ENCODE measurements at regions of chr10 and their contacts with region 1.

Region 1: DNA sequence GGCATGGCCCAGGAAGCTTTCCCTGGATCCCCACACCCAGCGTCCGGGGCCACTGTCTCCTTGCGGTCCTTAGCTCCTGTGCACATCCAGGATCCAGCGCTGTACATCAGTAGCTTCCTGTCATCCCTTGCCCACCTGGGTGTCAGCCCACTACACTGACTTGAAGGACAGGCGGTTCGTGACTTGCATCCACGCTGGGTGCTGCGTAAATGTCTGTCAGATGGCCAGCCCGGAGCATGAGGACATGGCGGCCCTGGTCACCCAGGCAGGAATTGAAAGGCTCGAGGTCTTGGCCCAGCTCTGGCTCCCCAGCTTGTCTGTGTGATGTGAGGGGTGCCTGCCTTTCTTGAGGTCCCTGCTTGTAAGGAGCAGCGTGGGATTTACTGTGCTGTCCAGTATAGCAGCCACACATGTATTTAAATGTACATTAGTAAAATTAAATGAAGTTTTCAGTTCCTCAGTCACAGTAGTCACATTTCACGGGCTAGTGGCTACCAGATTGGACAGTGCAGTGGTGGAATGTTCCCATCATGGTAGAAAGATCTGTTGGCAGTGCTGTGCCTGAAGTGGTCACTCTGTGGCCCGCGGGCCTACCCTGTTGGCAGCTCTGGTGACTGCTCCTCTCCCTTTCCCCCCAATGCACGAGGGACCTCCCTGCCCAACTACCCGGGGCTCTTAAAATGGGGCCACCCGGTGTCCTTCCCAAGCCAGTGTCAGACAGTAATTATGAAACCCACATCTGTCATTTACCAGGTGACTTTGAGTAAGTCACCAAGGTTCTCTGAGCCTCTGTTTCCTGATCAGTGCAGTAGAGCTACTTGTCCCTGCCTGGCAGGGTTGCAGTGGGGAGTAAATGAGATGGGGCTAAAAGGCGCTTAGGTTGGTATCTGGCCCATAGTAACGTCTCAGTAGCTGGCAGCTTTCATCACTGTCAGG is 97.8 kb upstream of the PPIF start:
- DNase-seq: peak; percentile 82
- H3K4me3 ChIP-seq: peak overlapping the region; percentile 76
- H3K27ac ChIP-seq: peak overlapping the region; percentile 90
- H3K4me1 ChIP-seq: peaks cover 86% of the 10 kb centered on the region
- CTCF ChIP-seq: no peak

Region 2: DNA sequence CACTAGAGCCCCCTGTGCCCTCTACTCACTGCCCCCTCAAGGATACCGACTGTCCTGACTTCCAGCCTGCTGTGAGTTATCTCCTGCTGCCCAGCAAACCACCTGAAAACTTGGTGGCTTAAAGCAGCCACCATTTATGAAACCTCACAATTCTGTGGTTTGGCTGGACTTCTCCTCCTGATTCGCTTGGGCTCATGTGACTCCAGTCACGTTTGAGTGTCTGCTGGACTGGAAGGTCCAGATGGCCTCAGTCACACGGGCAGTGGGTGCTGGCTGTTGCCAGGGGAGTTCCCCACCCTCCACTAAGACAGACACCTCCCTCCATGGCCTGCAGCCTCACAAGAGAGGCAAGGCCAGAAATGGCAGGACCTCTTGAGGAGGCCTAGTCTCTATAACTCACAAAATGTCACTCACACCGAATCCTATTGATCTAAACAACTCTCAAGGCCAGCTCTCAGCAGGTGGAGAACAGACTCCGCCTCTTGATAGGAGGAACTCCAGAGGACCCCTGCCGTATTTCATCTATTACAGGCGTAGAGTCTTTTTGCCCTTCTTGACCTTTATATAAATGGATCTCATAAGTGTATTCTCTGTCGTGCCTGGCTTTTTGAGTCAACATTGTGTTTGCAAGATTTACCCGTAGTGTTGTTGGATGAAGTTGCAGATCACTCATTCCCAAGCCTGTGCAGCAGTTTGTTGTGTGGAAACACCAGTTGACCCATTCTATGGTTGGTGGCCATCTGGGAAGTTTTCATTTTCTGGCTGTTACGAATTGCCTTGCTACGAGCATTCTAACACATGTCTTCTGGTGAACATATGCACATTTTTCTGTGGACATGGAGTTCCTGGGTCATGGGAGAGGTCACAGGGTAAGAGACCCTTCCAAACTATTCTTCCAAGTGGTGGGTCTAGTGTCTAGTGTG is 132.4 kb before region 1 on chr10:
- CTCF ChIA-PET with region 1: no interaction called
- POLR2A ChIA-PET with region 1: no interaction called
- intact Hi-C with region 1: no loop called
- DNase-seq: no peak
- H3K4me3 ChIP-seq: no peak overlapping the region
- H3K27ac ChIP-seq: no peak overlapping the region
- H3K4me1 ChIP-seq: peaks cover 12% of the 10 kb centered on the region
- CTCF ChIP-seq: no peak

Region 3: DNA sequence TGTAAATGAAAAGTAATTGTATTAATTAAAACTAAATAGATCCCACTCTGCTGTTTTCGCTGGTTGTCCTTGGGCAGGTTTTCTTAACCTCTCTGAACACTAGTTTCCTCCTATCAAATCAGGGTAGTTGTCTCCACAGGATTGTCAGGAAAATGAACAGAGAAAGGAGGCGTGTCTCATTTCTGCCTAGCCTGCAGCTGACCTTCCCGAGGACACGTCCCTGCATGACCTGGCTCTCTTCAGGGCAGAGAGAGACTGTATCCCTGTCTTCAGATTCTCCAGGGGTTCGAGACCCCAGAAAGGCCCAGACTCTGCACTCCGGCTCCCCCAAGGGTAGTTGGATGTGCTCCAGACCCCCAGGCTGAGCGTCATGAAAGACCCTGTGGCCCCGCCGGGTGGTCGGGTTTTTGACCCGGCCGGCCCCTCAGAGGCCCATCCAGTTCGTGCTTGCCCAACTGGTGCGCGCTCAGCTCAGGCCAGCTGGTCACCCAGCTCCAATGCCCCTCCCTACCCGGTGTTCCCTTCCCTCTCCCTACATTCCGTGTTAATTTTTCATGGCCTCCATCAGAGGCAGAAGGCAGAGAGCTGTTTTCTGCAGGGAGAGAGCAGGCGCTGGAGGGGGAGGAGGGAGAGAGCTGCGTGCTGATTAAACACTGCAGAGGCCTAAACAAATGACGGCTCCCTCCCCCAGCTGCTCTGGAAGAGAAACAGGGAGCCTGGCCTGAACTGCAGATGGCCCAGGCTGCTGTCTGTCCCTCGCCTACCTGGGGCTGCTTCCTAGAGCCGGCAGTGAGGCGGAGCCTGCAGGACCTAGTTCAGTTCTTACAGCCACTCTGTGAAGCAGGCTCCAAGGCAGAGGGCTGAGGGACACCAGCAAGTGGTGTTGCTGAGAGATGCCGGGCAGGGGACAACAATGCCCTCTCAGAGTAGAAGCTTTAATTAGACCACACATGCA is 11.6 kb after region 1 on chr10:
- CTCF ChIA-PET with region 1: interaction called, 6 read pairs
- POLR2A ChIA-PET with region 1: interaction called, 60 read pairs
- intact Hi-C with region 1: loop called (anchors 2 kb)
- DNase-seq: no peak
- H3K4me3 ChIP-seq: no peak overlapping the region
- H3K27ac ChIP-seq: peak overlapping the region; percentile 44
- H3K4me1 ChIP-seq: peaks cover 45% of the 10 kb centered on the region
- CTCF ChIP-seq: no peak

Region 4: GRCh38 chr10:79266543-79267312 is 17.3 kb after region 1 on chr10:
- CTCF ChIA-PET with region 1: interaction called, 6 read pairs
- POLR2A ChIA-PET with region 1: interaction called, 60 read pairs
- intact Hi-C with region 1: loop called (anchors 2 kb)
- DNase-seq: peak; percentile 45
- H3K4me3 ChIP-seq: no peak overlapping the region
- H3K27ac ChIP-seq: peak overlapping the region; percentile 7
- H3K4me1 ChIP-seq: peaks cover 40% of the 10 kb centered on the region
- CTCF ChIP-seq: no peak

Region 5: DNA sequence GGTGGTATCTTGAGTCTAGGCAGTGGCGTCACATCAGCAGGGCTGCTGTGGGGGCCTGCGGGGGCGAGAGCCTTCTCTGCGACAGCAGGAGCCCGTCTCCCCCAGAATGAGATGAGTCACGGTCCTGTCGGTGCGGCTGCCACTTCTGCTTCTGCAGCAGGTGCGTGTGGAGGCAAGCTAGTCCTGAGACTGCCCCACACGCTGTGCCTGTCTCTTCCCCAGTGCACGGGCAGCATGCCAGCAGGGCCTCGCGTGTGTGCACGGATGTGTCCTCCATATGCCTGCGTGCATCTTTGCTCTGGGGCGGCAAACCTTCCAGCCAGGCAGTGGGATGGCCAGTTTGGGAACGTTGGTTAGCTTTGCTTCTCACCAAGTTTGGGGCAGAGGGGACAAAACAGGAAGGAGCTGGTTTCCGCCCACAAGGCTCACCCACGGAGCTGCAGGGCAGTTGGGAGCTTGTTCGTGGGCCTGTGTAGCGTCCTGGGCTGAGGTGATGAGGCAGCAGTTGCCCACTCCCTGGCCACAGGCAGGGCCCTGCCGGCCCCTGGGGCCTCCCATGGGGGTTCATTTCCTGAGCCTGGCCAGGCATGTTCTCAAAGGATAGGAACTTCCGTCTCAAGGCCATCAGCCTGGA is 37.0 kb after region 1 on chr10:
- CTCF ChIA-PET with region 1: interaction called, 4 read pairs
- POLR2A ChIA-PET with region 1: interaction called, 12 read pairs
- intact Hi-C with region 1: loop called (anchors 1 kb)
- DNase-seq: peak; percentile 89
- H3K4me3 ChIP-seq: peak overlapping the region; percentile 44
- H3K27ac ChIP-seq: peak overlapping the region; percentile 86
- H3K4me1 ChIP-seq: peaks cover 53% of the 10 kb centered on the region
- CTCF ChIP-seq: no peak

Region 6: DNA sequence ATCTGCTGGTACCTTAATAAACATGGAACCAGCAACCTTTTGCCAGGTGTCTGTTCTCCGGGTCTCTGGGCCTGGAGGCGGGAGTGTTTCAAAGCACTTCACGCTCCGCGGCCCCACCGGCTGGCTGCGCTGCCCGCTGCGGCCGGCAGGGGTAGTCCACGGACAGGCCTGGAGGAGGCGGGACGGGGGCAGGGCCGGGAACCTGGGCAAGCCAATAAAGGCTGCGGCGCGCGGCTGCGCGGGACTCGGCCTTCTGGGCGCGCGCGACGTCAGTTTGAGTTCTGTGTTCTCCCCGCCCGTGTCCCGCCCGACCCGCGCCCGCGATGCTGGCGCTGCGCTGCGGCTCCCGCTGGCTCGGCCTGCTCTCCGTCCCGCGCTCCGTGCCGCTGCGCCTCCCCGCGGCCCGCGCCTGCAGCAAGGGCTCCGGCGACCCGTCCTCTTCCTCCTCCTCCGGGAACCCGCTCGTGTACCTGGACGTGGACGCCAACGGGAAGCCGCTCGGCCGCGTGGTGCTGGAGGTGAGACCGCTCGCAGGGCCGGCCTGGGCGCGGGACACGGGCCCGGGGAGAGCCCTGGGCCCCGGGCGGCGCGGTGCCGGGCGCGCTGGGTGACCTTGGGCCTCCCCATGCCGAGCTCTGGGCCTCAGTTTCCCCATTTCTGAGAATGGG is 97.9 kb after region 1 on chr10 and contains the start of gene PPIF:
- CTCF ChIA-PET with region 1: interaction called, 5 read pairs
- POLR2A ChIA-PET with region 1: interaction called, 3 read pairs
- intact Hi-C with region 1: loop called (anchors 2 kb)
- DNase-seq: peak; percentile 93
- H3K4me3 ChIP-seq: peak within 1 kb of the TSS; percentile 96
- H3K27ac ChIP-seq: peak within 1 kb of the TSS; percentile 78
- H3K4me1 ChIP-seq: peaks cover 30% of the 10 kb centered on the region
- CTCF ChIP-seq: peak; percentile 79
- total RNA-seq, gene PPIF: 44.8 and 55.7 TPM in 2 replicates